Mammary epithelial cell (primary cell): ENCODE measurements at regions of chr1 and their contacts with region 1.

Region 1: DNA sequence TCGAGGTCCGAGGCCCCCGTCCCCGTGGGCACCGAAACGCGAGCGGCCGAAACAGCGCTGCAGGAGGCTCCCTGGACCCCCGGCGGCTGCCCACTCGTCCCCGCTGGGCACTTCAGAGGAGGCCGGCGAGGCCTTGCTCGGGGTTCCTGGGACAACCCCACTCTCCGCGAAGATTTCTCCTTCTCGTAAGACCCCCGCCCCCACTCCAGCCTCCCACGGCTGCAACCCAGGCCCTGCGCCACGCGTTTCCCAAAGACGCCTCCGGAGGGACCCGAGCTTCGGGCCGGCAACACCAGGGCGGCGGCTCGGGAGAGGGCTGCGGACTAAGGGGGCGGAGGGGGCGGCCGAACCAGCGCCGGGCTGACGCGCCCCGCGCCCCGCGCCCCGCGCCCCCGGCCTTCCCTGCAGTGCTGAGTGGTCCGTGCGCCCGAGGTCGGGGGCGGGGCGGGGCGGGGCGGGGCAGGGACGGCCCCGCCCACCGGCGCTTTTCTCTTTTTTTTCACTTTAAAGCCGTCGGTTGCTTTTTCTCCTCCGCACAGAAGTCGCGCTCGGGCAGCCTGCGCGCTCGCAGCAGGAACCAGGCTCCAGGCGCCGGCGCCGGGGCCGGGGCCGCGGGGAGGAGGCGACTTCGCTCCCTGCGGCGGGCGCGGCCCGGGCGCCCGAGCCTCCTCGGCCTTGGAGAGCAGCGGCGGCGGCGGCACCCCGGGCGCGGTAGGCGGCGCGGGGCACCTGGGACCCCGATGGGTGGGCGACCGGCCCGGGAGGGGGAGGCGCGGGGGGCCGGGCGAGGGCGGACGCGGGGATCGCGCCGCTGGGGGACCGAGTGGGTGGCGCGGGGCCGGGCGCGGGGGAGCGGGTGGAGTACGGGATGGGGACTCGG is at the start of gene SPSB1:
- DNase-seq: peak; percentile 73
- H3K4me3 ChIP-seq: peak within 1 kb of the TSS; percentile 53 to 96 (median 74)
- H3K27ac ChIP-seq: peak within 1 kb of the TSS; percentile 63
- H3K4me1 ChIP-seq: peaks cover 32% of the 10 kb centered on the region
- H3K27me3 ChIP-seq: no peaks in the 10 kb centered on the region
- CTCF ChIP-seq: no peak
- total RNA-seq, gene SPSB1: 18.2 to 56.7 TPM

Region 2: GRCh38 chr1:9211291-9211811 is 81.2 kb before region 1 on chr1:
- CTCF ChIA-PET with region 1: no interaction called
- dilution Hi-C with region 1: no loop called
- in situ Hi-C with region 1: no loop called
- intact Hi-C with region 1: no loop called
- DNase-seq: no peak
- H3K4me3 ChIP-seq: no peak overlapping the region
- H3K27ac ChIP-seq: no peak overlapping the region
- H3K4me1 ChIP-seq: no peaks in the 10 kb centered on the region
- H3K27me3 ChIP-seq: no peaks in the 10 kb centered on the region
- CTCF ChIP-seq: no peak

Region 3: GRCh38 chr1:9234223-9235095 is 58.1 kb before region 1 on chr1 and contains the start of gene H6PD:
- CTCF ChIA-PET with region 1: no interaction called
- dilution Hi-C with region 1: no loop called
- in situ Hi-C with region 1: no loop called
- intact Hi-C with region 1: loop called (anchors 1 kb)
- DNase-seq: peak; percentile 74
- H3K4me3 ChIP-seq: peak within 1 kb of the TSS; percentile 52 to 66 (median 65)
- H3K27ac ChIP-seq: peak within 1 kb of the TSS; percentile 64
- H3K4me1 ChIP-seq: peaks cover 29% of the 10 kb centered on the region
- H3K27me3 ChIP-seq: no peaks in the 10 kb centered on the region
- CTCF ChIP-seq: peak; percentile 37 to 75
- total RNA-seq, gene H6PD: 12.6 to 18.0 TPM

Region 4: GRCh38 chr1:9317591-9318417 is 25.2 kb after region 1 on chr1:
- CTCF ChIA-PET with region 1: no interaction called
- dilution Hi-C with region 1: no loop called
- in situ Hi-C with region 1: no loop called
- intact Hi-C with region 1: loop called (anchors 1 kb)
- DNase-seq: no peak
- H3K4me3 ChIP-seq: no peak overlapping the region
- H3K27ac ChIP-seq: no peak overlapping the region
- H3K4me1 ChIP-seq: peaks cover 15% of the 10 kb centered on the region
- H3K27me3 ChIP-seq: no peaks in the 10 kb centered on the region
- CTCF ChIP-seq: no peak

Region 5: DNA sequence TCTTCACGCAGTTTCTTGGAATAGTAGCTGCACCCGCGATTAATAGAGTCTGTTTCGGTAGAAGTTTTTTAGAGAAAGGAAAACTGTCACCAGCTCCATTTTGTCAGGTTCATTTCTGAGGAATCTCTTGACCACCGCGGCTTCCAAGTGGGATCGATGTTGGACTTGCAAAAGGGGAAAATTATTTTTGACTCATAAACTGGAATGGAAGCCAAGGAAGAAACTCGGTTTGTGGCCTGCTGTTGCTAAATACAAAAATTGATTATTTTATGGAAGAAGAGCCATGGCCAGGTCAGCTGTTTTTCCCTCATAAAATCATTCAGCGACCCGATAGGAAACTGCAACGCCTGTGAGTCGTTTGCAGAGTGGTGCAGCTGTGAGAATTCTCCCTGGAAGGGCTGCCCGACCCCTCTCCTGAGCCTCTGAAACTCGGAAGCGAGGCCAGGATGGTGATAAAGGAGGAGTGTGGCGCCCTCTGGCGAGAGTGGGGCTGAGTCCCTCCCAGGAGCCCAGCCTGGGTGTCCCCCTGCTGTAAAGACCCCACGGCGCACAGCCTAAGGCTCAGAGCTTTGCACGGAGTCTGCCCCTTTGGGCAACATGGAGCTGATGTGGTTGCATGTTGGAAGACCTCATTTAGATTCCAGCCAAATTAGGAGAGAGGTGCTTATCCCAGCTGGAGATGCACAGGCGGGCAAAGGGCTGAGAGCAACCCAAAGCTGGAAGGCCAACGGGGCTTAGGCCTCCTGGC is 163.1 kb after region 1 on chr1:
- CTCF ChIA-PET with region 1: interaction called, 7 read pairs
- dilution Hi-C with region 1: loop called (anchors 25 kb)
- in situ Hi-C with region 1: loop called in 1 of 2 experiments (anchors 10 kb)
- intact Hi-C with region 1: loop called (anchors 1 kb)
- DNase-seq: peak; percentile 24
- H3K4me3 ChIP-seq: no peak overlapping the region
- H3K27ac ChIP-seq: no peak overlapping the region
- H3K4me1 ChIP-seq: peaks cover 4% of the 10 kb centered on the region
- H3K27me3 ChIP-seq: no peaks in the 10 kb centered on the region
- CTCF ChIP-seq: peak; percentile 61 to 91

Region 6: DNA sequence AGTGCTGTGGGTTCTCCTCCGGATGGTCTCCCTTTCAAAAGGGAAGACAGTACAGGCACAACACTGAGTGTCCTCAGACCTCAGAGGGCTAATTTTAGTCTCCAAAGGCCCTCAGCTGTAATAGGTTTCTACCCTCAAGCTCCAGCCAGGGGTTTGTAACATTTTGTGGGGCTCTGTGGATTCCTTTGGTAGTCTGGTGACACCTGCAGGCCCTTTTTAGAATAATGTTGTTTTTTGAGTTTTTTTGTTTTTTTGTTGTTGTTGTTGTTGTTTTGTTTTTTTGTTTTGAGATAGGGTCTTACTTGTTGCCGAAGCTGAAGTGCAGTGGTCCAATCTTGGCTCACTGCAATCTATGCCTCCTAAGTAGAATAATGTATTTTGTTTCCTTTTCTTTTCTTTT is 281.1 kb after region 1 on chr1:
- CTCF ChIA-PET with region 1: no interaction called
- dilution Hi-C with region 1: no loop called
- in situ Hi-C with region 1: loop called in 1 of 2 experiments (anchors 25 kb)
- intact Hi-C with region 1: loop called (anchors 1 kb)
- DNase-seq: no peak
- H3K4me3 ChIP-seq: no peak overlapping the region
- H3K27ac ChIP-seq: no peak overlapping the region
- H3K4me1 ChIP-seq: no peaks in the 10 kb centered on the region
- H3K27me3 ChIP-seq: no peaks in the 10 kb centered on the region
- CTCF ChIP-seq: peak in 1 of 2 donors; percentile 34